Activated CD4-positive, alpha-beta T cell treated with anti-CD3 and anti-CD28 coated beads, Interleukin-2, amount 10 ng/mL, durations not matched to agents 7 days and 5 days (primary cell): ENCODE measurements at regions of chr1 and their contacts with region 1.

Region 1: GRCh38 chr1:9629445-9630201 is 21.9 kb upstream of the PIK3CD start:
- DNase-seq: peak; percentile 86
- H3K4me3 Mint-ChIP-seq: peak overlapping the region; percentile 95
- H3K27ac Mint-ChIP-seq: peak overlapping the region; percentile 98
- H3K4me1 Mint-ChIP-seq: peaks cover 58% of the 10 kb centered on the region
- H3K27me3 Mint-ChIP-seq: peaks cover 1% of the 10 kb centered on the region

Region 2: GRCh38 chr1:9603766-9604753 is 25.6 kb before region 1 on chr1:
- CTCF ChIA-PET with region 1: no interaction called
- POLR2A ChIA-PET with region 1: no interaction called
- DNase-seq: no peak
- H3K4me3 Mint-ChIP-seq: no peak overlapping the region
- H3K27ac Mint-ChIP-seq: peak overlapping the region; percentile 25
- H3K4me1 Mint-ChIP-seq: no peaks in the 10 kb centered on the region
- H3K27me3 Mint-ChIP-seq: no peaks in the 10 kb centered on the region

Region 3: DNA sequence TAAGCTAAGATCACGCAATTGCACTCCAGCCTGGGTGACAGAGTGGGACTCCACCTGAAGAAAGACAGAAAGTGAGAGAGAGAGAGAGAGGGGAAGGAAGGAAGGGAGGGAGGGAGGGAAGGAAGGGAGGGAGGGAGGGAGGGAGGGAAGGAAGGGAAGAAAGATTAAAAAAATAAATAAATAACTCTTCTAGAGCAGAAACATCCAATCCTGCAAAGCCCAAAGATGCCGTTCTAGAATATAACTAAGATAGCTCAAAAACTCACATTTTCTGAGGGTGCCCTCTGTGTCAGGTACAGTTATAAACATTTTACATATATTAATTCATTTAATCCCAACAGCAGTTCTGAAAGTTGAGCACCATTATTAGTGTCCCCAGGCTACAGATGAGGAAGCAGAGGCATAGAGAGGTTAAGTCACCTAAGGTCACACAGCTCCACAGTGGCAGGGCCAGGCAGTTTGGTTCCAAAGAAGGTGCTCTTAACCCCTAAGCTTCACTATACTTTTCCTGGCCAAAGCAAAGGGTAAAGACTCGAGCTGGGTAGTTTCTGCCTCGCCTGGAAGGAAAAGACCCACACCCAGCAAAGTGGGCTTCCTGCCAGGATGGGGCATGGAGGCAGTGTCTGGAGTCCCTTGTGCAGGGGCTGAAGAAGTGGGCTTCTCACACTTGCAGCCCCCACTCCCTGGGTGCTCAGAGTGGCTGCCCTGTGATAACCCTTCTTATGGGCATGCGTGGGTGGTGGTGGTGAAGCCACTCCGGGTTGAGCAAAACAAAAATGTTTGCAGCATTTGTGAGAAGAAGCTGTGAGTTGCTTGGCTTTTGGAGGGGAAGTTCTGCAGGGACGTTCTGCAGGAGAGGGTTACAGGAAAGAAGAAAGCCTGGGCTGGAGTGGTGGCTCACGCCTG is 14.0 kb after region 1 on chr1:
- CTCF ChIA-PET with region 1: interaction called, 37 read pairs
- POLR2A ChIA-PET with region 1: interaction called, 4 read pairs
- DNase-seq: no peak
- H3K4me3 Mint-ChIP-seq: no peak overlapping the region
- H3K27ac Mint-ChIP-seq: peak overlapping the region; percentile 83
- H3K4me1 Mint-ChIP-seq: peaks cover 69% of the 10 kb centered on the region
- H3K27me3 Mint-ChIP-seq: no peaks in the 10 kb centered on the region

Region 4: GRCh38 chr1:9689011-9689706 is 59.5 kb after region 1 on chr1:
- CTCF ChIA-PET with region 1: interaction called, 24 read pairs
- POLR2A ChIA-PET with region 1: interaction called, 4 read pairs
- DNase-seq: peak; percentile 85
- H3K4me3 Mint-ChIP-seq: peak overlapping the region; percentile 67
- H3K27ac Mint-ChIP-seq: peak overlapping the region; percentile 80
- H3K4me1 Mint-ChIP-seq: peaks cover 74% of the 10 kb centered on the region
- H3K27me3 Mint-ChIP-seq: no peaks in the 10 kb centered on the region

Region 5: GRCh38 chr1:9724706-9725476 is 95.3 kb after region 1 on chr1:
- CTCF ChIA-PET with region 1: interaction called, 78 read pairs
- POLR2A ChIA-PET with region 1: no interaction called
- DNase-seq: peak; percentile 74
- H3K4me3 Mint-ChIP-seq: no peak overlapping the region
- H3K27ac Mint-ChIP-seq: peak overlapping the region; percentile 71
- H3K4me1 Mint-ChIP-seq: peaks cover 71% of the 10 kb centered on the region
- H3K27me3 Mint-ChIP-seq: no peaks in the 10 kb centered on the region

Region 6: DNA sequence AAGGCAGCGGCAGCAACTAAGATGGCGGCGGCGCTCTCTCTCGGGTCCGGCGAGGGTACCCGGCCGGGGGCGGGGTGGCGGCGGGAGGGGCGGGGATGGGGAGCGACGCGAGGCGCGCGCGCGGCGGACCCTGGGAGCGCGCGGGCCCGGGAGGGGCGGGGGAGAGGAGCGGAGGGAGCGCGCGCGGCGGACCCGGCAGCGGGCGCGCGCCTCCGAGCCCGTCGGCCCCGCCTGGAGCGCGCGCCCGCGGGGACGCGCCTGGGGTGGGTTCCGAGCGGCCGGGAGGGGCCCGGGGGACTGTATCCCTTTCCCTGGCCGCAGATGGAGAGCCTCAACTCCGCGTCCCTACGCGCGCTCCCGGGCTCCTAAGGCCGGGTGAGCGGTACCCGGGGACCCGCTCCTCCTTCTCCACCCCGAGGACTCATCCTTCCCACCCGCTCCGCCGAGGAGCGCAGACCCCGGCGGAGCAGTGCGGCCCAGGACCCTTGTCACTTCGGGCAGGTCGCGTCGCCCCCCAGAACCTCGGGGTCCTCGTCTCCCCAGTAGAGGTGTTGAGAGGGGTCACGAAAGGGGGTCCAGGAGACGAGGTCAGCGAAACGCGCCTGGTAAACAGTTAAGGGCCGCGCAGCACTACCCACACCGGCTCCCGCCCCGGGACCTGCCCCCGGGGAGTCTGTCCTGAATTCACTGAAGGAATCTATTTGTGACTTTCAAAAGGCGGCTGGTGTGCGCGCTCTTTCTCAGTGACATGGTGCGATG is 194.5 kb after region 1 on chr1 and contains the start of gene CLSTN1:
- CTCF ChIA-PET with region 1: no interaction called
- POLR2A ChIA-PET with region 1: no interaction called
- DNase-seq: peak; percentile 92
- H3K4me3 Mint-ChIP-seq: peak within 1 kb of the TSS; percentile 98
- H3K27ac Mint-ChIP-seq: peak within 1 kb of the TSS; percentile 91
- H3K4me1 Mint-ChIP-seq: peaks cover 51% of the 10 kb centered on the region
- H3K27me3 Mint-ChIP-seq: peaks cover 3% of the 10 kb centered on the region
- total RNA-seq, gene CLSTN1: 121 to 134 TPM

Region 7: GRCh38 chr1:9867408-9868243 is 238.0 kb after region 1 on chr1:
- CTCF ChIA-PET with region 1: interaction called, 13 read pairs
- POLR2A ChIA-PET with region 1: no interaction called
- DNase-seq: peak; percentile 91
- H3K4me3 Mint-ChIP-seq: no peak overlapping the region
- H3K27ac Mint-ChIP-seq: no peak overlapping the region
- H3K4me1 Mint-ChIP-seq: peaks cover 6% of the 10 kb centered on the region
- H3K27me3 Mint-ChIP-seq: no peaks in the 10 kb centered on the region